Activated naive CD4-positive, alpha-beta T cell treated with anti-CD3 and anti-CD28 coated beads for 36 hours (primary cell): ENCODE measurements at regions of chr2 and their contacts with region 1.

Region 1: DNA sequence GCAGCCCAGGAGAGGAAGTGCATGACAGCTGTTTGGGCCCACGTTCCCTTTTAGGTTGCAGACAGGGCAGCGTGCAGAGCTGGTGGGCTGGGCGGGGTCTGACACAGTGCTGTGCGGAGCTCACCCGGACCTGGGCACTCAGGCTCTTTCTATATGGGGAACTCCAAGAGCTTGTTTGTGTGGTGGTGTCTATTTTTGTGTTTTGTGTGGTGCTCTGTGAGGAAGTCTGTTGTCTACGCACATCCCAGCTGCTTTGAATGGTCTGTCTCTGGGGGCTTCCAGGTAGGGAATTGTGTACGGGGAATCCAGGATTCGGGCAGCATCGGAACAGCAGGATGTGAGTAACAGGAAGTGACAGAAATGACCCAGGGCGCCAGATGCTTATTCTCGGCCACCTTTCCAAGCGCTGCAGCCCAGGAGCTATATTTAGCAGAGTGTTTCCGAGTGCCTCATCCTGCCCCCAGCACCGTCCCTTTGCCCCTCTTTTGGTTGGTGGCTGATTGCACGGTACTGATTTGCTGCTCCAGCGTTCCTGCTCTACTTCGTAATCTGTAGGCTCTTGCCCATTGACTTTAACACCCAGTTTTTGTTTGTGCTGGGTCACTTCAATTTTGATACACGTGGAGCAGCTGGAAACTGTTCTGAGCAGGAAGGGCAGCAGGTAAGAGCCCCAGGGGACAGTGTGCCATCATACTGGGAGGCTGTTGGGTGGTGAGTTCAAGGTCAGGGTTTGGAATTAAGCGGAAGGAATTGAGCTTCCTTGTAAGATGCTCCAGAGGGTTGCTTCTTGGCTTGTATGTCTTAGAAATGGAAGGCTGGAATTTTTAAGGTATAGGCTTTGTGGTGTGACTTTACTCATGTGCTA is 64.7 kb downstream of the DGKD start:
- DNase-seq: peak; percentile 67
- H3K4me3 Mint-ChIP-seq: peak overlapping the region; percentile 67
- H3K27ac Mint-ChIP-seq: peak overlapping the region; percentile 88
- H3K4me1 Mint-ChIP-seq: peaks cover 97% of the 10 kb centered on the region
- H3K27me3 Mint-ChIP-seq: no peaks in the 10 kb centered on the region

Region 2: GRCh38 chr2:232974396-232974795 is 444.6 kb before region 1 on chr2:
- CTCF ChIA-PET with region 1: no interaction called
- intact Hi-C with region 1: no loop called
- DNase-seq: no peak
- H3K4me3 Mint-ChIP-seq: no peak overlapping the region
- H3K27ac Mint-ChIP-seq: no peak overlapping the region
- H3K4me1 Mint-ChIP-seq: no peaks in the 10 kb centered on the region
- H3K27me3 Mint-ChIP-seq: no peaks in the 10 kb centered on the region

Region 3: GRCh38 chr2:233443468-233444183 is 24.6 kb after region 1 on chr2:
- CTCF ChIA-PET with region 1: interaction called, 23 read pairs
- intact Hi-C with region 1: loop called (anchors 1 kb)
- DNase-seq: peak; percentile 91
- H3K4me3 Mint-ChIP-seq: no peak overlapping the region
- H3K27ac Mint-ChIP-seq: peak overlapping the region; percentile 30
- H3K4me1 Mint-ChIP-seq: peaks cover 16% of the 10 kb centered on the region
- H3K27me3 Mint-ChIP-seq: no peaks in the 10 kb centered on the region

Region 4: GRCh38 chr2:233566141-233566960 is 147.4 kb after region 1 on chr2 and contains the start of gene USP40:
- CTCF ChIA-PET with region 1: no interaction called
- intact Hi-C with region 1: loop called (anchors 5 kb)
- DNase-seq: peak; percentile 75
- H3K4me3 Mint-ChIP-seq: peak within 1 kb of the TSS; percentile 92
- H3K27ac Mint-ChIP-seq: peak within 1 kb of the TSS; percentile 92
- H3K4me1 Mint-ChIP-seq: peaks cover 9% of the 10 kb centered on the region
- H3K27me3 Mint-ChIP-seq: no peaks in the 10 kb centered on the region
- total RNA-seq, gene USP40: 15.3 to 17.5 TPM

Region 5: GRCh38 chr2:234494361-234495250 is 1075.6 kb after region 1 on chr2:
- CTCF ChIA-PET with region 1: no interaction called
- intact Hi-C with region 1: loop called (anchors 5 kb)
- DNase-seq: no peak
- H3K4me3 Mint-ChIP-seq: peak overlapping the region; percentile 90
- H3K27ac Mint-ChIP-seq: peak overlapping the region; percentile 89
- H3K4me1 Mint-ChIP-seq: peaks cover 48% of the 10 kb centered on the region
- H3K27me3 Mint-ChIP-seq: no peaks in the 10 kb centered on the region